RWPE1 (cell line): ENCODE measurements at regions of chr19 and their contacts with region 1.

Region 1: DNA sequence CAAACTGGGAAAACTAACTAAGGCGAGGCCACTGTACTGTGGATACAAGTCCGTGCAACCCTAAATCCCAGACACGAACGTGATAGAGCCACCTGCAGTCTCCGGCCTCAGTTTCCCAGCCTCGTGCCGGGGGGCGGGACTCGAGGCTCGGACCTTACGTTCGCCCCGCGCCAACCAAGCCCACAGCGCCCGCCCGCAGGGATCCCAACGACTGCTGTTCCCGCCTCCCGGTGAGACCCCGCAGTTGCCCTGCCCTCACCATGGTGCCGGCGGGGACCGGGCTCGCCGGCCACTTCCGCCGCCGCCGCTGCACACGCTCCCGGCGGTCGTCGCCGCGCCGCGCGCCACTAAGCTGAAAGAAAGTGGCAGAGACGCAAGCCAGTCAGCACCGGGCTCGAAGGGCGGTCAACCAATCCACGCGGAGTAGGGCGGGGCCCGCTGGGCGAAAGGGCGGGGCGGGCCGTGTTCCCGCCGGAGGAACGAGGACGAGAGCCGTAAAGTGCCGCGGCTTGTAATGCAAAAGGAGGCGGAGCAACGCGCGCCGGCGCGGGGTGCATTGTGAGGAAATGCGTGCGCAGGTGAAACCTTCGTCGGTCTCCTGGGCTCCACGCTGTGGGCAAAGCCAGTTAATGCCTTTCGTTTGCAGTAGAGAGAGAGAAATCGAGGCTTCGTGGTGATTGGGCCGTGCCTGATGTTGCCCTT is at the start of gene LSM4:
- DNase-seq: peak; percentile 99
- H3K27ac ChIP-seq: peak within 1 kb of the TSS; percentile 87
- CTCF ChIP-seq: peak; percentile 51; the same call in 1 of the 2 replicates

Region 2: DNA sequence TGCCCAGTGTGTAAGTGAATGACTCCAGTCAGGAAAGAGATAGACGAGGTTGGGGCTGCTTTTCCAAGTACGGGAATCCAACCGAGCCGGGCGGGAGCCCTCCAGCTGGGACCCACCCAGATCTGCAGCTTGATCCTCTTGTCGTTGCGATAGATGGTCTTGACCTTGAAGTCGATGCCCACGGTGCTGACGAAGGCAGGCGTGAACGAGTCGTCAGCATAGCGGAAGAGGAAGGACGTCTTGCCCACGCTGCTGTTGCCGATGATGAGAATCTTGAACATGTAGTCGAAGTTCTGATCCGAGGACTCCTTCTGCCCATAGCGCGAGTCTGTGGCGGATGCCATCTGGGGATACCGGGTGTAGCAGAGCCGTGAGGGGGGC is 120.5 kb before region 1 on chr19:
- CTCF ChIA-PET with region 1: no interaction called
- POLR2A ChIA-PET with region 1: no interaction called
- DNase-seq: no peak
- H3K27ac ChIP-seq: no peak overlapping the region; the same call in 1 of the 2 replicates
- CTCF ChIP-seq: no peak

Region 3: DNA sequence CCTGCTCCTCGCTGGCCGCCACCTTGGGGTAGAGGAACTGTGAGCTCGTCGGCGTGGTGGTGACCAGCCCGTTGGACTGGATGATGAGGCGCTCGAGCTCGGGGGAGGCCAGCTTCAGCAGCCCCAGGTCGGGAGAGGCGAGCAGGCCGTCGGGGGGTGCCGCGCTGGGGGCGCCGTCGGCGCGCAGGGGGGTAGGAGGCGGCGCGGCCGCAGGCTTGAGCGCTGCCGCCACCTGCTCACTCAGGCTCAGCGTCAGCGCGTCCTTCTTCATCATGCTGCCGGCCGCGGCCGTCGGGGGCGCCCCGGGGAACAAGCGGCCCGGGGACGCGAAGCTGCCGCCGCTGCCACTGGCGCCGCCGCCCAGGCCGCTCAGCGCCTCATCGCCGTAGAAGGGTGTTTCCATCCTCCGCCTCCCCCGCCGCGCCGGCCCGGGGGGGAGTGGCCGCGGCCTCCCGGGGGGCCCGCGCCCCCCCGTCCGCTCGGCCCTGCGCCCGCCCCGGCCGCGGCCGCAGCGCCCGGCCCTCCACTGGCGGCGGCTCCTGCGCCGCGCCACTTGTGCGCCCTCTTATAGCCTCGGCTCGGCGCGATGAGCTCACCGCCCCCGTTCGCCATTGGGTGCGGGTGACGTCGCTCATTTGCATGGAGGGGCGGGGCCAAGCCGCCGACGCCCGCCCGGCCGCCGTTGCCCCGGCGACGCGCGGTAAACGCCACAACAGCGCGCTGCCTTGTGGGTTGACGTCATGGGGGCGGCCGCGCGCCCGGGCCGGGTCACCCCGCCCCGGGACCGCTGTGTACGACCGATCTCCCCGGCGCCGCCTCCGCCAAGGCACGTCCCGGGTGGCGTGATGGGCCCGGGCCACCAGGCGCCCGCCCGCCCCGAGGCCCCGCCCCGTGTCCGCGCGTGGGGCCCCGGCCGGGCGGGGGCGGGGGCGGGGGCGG is 41.6 kb before region 1 on chr19 and contains the start of gene JUND:
- CTCF ChIA-PET with region 1: interaction called, 23 read pairs
- POLR2A ChIA-PET with region 1: interaction called, 40 read pairs
- DNase-seq: peak; percentile 96
- H3K27ac ChIP-seq: peak within 1 kb of the TSS; percentile 99
- CTCF ChIP-seq: no peak

Region 4: GRCh38 chr19:18557474-18558201 is 234.7 kb after region 1 on chr19 and contains the start of gene KXD1:
- CTCF ChIA-PET with region 1: no interaction called
- POLR2A ChIA-PET with region 1: no interaction called
- DNase-seq: peak; percentile 96
- H3K27ac ChIP-seq: peak within 1 kb of the TSS; percentile 83
- CTCF ChIP-seq: no peak